ENCODE measurements at regions of chr1 and their contacts with region 1.

Region 1: GRCh38 chr1:86704458-86704971 is at the start of gene SH3GLB1:
- DNase-seq: peak; percentile 93
- ATAC-seq: peak; percentile 92
- H3K4me3 Mint-ChIP-seq: peak within 1 kb of the TSS; percentile 96
- H3K27ac Mint-ChIP-seq: peak within 1 kb of the TSS; percentile 97
- H3K4me1 Mint-ChIP-seq: peaks cover 25% of the 10 kb centered on the region
- H3K27me3 Mint-ChIP-seq: no peaks in the 10 kb centered on the region
- total RNA-seq, gene SH3GLB1: 62.4 to 71.0 TPM

Region 2: GRCh38 chr1:86395771-86396497 is 308.6 kb before region 1 on chr1 and contains the start of gene ODF2L:
- POLR2A ChIA-PET with region 1: interaction called, 14 read pairs
- DNase-seq: peak; percentile 88
- ATAC-seq: peak; percentile 100
- H3K4me3 Mint-ChIP-seq: peak within 1 kb of the TSS; percentile 96
- H3K27ac Mint-ChIP-seq: peak within 1 kb of the TSS; percentile 93
- H3K4me1 Mint-ChIP-seq: peaks cover 26% of the 10 kb centered on the region
- H3K27me3 Mint-ChIP-seq: no peaks in the 10 kb centered on the region
- total RNA-seq, gene ODF2L: 57.4 to 68.1 TPM

Region 3: GRCh38 chr1:86741947-86742572 is 37.5 kb after region 1 on chr1:
- POLR2A ChIA-PET with region 1: interaction called, 32 read pairs
- DNase-seq: no peak
- ATAC-seq: no peak
- H3K4me3 Mint-ChIP-seq: no peak overlapping the region
- H3K27ac Mint-ChIP-seq: no peak overlapping the region
- H3K4me1 Mint-ChIP-seq: peaks cover 4% of the 10 kb centered on the region
- H3K27me3 Mint-ChIP-seq: no peaks in the 10 kb centered on the region

Region 4: DNA sequence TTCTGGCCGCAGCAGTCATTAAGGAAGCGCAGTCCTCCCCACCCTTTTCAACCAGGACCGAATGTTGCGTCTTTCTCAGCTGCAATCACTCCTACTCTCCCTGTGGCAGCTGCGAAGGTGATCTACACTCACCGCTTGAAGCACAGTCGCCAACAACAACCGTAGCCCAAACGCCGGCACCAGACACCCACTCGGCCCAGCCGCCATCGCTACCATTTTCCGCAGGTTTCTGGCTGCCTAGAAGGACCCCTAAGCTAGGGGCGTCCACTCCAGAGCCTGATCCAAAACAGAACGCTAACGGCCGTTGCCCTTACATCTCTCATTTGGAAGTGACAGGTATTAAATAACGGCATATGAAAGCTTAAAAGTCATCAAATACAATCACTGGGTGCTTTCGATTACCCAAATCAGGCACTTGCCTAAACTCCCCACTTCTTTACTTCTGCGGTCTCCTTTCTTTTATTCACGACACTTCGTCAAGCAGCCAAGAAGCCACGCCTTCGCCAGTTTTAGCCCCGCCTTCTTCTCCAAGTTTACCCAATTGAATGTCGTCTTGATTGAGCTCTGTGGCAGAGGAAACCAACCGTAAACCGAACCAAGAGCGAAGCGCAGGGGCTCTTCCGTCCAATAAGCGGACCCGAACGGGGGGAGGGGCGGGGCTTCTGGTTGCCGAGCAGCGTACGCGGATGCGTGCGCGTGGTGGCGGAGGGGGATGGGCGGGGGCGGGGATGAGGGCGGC is 209.6 kb after region 1 on chr1 and contains the start of gene SELENOF:
- POLR2A ChIA-PET with region 1: interaction called, 24 read pairs
- DNase-seq: peak; percentile 96
- ATAC-seq: peak; percentile 92
- H3K4me3 Mint-ChIP-seq: no peak within 1 kb of the TSS
- H3K27ac Mint-ChIP-seq: no peak within 1 kb of the TSS
- H3K4me1 Mint-ChIP-seq: peaks cover 29% of the 10 kb centered on the region
- H3K27me3 Mint-ChIP-seq: no peaks in the 10 kb centered on the region
- total RNA-seq, gene SELENOF: 137 to 138 TPM

Region 5: DNA sequence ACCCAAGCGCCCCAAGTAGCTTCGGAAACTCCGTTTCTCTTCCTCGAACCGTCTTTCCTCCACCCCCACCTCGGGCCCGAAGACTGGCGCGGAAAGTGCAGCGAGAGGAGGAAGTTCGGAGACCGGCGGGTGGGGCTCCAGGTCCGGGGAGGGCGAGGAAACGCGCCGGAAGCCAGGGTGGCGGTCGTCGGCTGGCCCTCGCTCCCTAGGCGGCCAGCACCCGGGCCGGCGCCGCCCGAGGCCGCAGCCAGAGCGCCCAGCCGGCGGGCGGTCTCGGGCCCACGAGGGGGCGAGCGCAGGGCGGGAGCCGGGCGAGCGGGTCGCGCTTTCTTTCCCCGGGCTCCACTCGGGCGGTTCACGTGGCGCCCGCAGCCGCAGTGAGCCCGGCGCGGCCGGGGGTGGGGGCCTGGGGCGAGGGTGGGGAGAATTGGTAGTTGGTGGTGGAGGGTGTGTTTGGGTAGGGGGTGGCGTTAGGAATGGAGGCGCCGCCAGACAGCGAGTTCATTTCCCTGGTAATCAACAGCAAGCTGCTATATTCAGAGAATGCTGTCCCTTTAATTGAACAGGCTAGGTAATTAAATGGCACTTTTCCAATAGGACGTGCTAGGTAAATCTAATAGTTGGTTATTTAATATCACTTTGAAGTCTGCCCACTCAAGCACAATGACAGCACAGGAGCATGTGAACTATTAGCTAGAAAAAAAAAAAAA is 630.8 kb after region 1 on chr1:
- POLR2A ChIA-PET with region 1: interaction called, 11 read pairs
- DNase-seq: peak; percentile 77
- ATAC-seq: peak; percentile 59
- H3K4me3 Mint-ChIP-seq: peak overlapping the region; percentile 98
- H3K27ac Mint-ChIP-seq: peak overlapping the region; percentile 98
- H3K4me1 Mint-ChIP-seq: peaks cover 53% of the 10 kb centered on the region
- H3K27me3 Mint-ChIP-seq: no peaks in the 10 kb centered on the region